ENCODE measurements at regions of chr12 and their contacts with region 1.

Region 1: DNA sequence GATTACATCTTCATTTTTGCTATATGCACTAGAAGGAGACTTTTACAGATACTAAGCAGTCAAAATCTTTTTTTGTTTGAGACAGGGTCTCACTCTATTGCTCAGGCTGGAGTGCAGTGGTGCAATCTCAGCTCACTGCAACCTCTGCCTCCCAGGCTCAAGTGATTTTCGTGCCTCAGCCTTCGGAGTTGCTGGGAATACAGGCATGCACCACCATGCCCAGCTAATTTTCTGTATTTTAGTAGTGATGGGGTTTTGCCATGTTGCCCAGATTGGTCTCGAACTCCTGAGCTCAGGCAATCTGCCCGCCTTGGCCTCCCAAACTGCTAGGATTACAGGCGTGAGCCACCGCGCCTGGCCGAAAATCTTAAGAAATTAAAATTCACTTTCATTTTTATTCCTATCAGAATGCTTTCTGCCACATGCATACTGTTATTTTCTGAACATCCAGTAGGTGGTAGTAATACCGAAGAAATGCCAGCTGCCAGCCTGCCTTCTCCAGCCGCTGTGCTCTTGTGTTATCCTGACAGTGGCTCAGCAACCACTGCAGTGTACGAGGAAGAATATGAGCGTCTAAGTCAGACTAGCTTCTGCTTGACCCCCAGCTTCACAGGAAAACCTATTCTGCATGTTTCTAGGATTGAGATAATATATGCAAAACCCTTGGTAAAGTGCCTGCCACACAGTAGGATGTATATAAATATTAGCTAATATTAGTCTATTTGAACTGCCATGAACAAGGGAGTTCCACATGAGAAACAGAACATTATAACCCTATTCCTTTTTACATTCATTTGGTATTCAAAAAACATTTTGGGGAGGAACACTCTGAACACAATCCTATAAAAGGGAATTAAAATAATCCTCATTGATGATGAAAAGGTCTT is 54.2 kb downstream of the RPAP3 start:
- DNase-seq: peak; percentile 49
- H3K4me3 Mint-ChIP-seq: no peak overlapping the region
- H3K27ac Mint-ChIP-seq: no peak overlapping the region
- H3K4me1 Mint-ChIP-seq: peaks cover 14% of the 10 kb centered on the region
- H3K27me3 Mint-ChIP-seq: no peaks in the 10 kb centered on the region

Region 2: DNA sequence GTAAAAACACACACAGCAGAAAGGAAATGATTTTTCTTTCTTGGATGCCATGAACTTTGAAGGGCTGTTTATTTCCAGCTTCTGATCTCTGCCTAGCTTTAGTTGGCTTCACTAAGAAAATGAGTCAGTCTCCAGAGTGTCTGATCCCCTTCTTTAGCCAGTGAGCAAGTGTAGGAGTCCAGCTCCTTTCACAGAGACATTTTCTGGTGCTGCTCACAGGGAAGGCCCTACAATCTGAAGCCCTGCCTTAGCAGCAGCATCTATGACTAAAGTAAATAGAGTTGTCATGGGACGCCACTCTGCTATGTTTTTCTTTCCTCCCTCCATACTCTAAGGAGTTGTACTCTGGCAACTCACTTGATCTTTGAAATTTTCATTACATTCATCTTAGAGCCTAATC is 49.3 kb before region 1 on chr12:
- CTCF ChIA-PET with region 1: no interaction called
- POLR2A ChIA-PET with region 1: no interaction called
- DNase-seq: no peak
- H3K4me3 Mint-ChIP-seq: no peak overlapping the region
- H3K27ac Mint-ChIP-seq: no peak overlapping the region
- H3K4me1 Mint-ChIP-seq: peaks cover 8% of the 10 kb centered on the region
- H3K27me3 Mint-ChIP-seq: no peaks in the 10 kb centered on the region

Region 3: GRCh38 chr12:47636908-47637780 is 14.5 kb before region 1 on chr12:
- CTCF ChIA-PET with region 1: interaction called, 16 read pairs
- POLR2A ChIA-PET with region 1: no interaction called
- DNase-seq: peak; percentile 54
- H3K4me3 Mint-ChIP-seq: no peak overlapping the region
- H3K27ac Mint-ChIP-seq: no peak overlapping the region
- H3K4me1 Mint-ChIP-seq: peaks cover 7% of the 10 kb centered on the region
- H3K27me3 Mint-ChIP-seq: no peaks in the 10 kb centered on the region

Region 4: GRCh38 chr12:47672068-47672467 is 20.5 kb after region 1 on chr12:
- CTCF ChIA-PET with region 1: interaction called, 10 read pairs
- POLR2A ChIA-PET with region 1: no interaction called
- DNase-seq: no peak
- H3K4me3 Mint-ChIP-seq: no peak overlapping the region
- H3K27ac Mint-ChIP-seq: no peak overlapping the region
- H3K4me1 Mint-ChIP-seq: peaks cover 13% of the 10 kb centered on the region
- H3K27me3 Mint-ChIP-seq: no peaks in the 10 kb centered on the region

Region 5: GRCh38 chr12:47686645-47687240 is 35.1 kb after region 1 on chr12:
- CTCF ChIA-PET with region 1: interaction called, 29 read pairs
- POLR2A ChIA-PET with region 1: no interaction called
- DNase-seq: no peak
- H3K4me3 Mint-ChIP-seq: no peak overlapping the region
- H3K27ac Mint-ChIP-seq: no peak overlapping the region
- H3K4me1 Mint-ChIP-seq: no peaks in the 10 kb centered on the region
- H3K27me3 Mint-ChIP-seq: no peaks in the 10 kb centered on the region

Region 6: DNA sequence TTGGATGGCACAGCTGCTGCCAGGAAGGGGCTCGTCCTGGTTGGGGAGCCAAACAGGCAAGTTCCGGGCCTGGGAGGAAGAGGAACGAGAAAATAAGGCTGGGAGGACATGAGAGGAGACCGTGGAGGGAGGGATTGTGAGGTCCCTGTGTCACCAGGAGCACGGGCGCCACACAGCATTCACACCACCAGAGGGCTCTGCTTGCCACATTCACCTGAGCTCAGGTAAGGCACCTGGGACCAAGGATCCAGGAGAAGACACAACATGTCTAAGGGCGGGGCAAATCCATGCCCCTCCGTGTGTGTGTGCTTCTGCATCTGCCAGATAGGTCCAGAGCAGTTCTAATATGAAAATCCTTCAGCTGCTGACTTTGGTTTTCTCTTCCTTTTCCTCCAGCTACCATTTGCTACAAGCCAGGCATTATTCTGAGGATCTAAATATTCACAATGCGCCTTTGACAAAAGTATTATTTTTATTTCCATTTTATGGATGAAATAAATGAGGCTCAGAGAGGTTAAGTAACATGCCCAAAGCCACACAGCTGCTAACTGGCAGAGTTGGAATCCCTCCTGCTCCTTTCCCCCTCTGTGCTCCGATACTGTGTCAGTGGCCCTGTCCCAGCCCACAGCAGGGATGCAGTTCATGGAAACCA is 92.5 kb after region 1 on chr12:
- CTCF ChIA-PET with region 1: no interaction called
- POLR2A ChIA-PET with region 1: no interaction called
- DNase-seq: peak; percentile 61
- H3K4me3 Mint-ChIP-seq: no peak overlapping the region
- H3K27ac Mint-ChIP-seq: no peak overlapping the region
- H3K4me1 Mint-ChIP-seq: peaks cover 20% of the 10 kb centered on the region
- H3K27me3 Mint-ChIP-seq: peaks cover 17% of the 10 kb centered on the region

Region 7: DNA sequence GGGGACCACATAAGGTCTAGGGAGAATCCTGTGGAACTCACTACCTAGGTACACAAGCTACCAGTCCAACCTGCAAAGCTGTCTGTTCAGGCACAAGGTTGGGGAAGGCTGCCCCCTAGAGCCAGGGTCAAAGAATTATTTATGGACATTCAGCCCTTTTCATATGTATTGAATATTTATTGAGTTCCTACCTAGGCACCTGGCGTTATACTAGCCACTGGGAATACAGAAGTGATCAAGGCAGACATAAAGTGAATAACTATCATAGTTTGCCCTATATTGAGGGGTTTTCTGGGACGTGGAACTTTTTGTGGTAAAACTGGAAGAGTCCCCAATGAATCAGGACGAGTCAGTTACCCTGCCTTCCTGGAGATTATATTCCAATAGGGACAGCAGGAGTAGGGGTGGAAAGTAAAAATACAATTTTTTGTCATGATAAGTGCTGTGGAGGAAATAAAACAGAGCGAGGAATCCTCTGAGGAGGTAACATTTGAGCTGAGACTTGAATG is 115.7 kb after region 1 on chr12:
- CTCF ChIA-PET with region 1: interaction called, 10 read pairs
- POLR2A ChIA-PET with region 1: no interaction called
- DNase-seq: peak; percentile 80
- H3K4me3 Mint-ChIP-seq: no peak overlapping the region
- H3K27ac Mint-ChIP-seq: no peak overlapping the region
- H3K4me1 Mint-ChIP-seq: peaks cover 3% of the 10 kb centered on the region
- H3K27me3 Mint-ChIP-seq: peaks cover 10% of the 10 kb centered on the region